ENCODE measurements at regions of chr6 and their contacts with region 1.

Region 1: DNA sequence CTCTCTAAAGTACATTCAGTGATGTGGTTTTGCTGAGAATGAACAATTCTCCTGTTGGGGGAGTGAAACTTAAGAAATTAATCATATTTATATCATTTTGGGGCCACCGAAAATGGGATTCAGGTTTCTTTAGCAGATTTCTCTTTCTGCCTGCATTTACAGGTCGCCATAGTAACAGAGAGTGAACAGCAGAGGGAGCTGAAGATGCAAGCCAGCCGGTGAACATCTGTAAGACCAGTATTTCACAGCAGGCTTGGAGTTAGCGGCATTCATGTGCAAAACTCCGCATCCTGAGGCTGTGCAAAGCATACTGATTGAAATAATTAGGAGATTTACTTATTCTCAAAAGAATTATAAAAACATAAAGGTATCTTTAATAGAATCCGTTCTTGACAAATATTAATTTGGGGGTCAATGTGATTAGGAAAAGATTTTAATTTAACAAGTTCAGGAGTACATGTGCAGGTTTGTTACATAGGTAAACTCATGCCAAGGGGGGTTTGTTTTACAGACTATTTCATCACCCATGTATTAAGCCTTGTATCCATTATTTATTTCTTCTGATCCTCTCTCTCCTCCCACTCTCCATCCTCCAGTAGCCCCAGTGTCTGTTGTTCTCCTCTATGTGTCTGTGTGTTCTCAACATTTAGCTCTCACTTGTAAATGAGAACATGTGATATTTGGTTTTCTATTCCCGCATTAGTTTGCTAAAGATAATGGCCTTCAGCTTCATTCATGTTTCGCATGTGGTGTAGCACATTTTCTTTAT is 17.8 kb upstream of the HSF2 start:
- DNase-seq: peak; percentile 56 to 77 (median 58)
- ATAC-seq: peak; percentile 99
- H3K4me3 ChIP-seq: no peak overlapping the region
- H3K27ac ChIP-seq: no peak overlapping the region
- H3K4me1 ChIP-seq: no peaks in the 10 kb centered on the region
- H3K27me3 ChIP-seq: no peaks in the 10 kb centered on the region
- CTCF ChIP-seq: peak; percentile 70 to 78 (median 78)
- EP300 ChIP-seq: no peak
- POLR2A ChIP-seq: no peak
- RAD21 ChIP-seq: peak; percentile 70 to 85

Region 2: DNA sequence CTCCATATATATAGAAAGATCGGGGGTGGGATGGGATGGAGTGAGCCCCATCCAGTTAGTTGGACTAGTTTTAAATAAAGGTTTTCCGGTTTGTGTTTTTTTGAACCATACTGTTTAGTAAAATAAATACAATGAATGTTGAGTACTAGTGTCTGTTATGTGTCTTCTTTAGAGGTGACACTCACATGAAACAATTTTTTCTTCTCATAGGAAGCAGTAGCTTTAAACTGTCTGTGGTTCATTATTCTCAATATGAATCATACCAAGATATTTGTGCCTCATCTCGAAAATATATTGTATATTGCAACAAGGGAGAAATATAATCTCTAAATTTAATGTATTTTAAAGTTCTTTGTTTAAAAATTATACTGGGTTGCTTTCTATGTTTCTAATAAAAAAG is 51.1 kb after region 1 on chr6:
- CTCF ChIA-PET with region 1: no interaction called
- POLR2A ChIA-PET with region 1: no interaction called
- in situ Hi-C with region 1: no loop called
- intact Hi-C with region 1: loop called (anchors 5 kb)
- DNase-seq: no peak
- ATAC-seq: no peak
- H3K4me3 ChIP-seq: no peak overlapping the region
- H3K27ac ChIP-seq: no peak overlapping the region
- H3K4me1 ChIP-seq: no peaks in the 10 kb centered on the region; a peak in 1 of 5 replicates
- H3K27me3 ChIP-seq: no peaks in the 10 kb centered on the region
- CTCF ChIP-seq: no peak
- EP300 ChIP-seq: no peak
- POLR2A ChIP-seq: no peak
- RAD21 ChIP-seq: no peak

Region 3: DNA sequence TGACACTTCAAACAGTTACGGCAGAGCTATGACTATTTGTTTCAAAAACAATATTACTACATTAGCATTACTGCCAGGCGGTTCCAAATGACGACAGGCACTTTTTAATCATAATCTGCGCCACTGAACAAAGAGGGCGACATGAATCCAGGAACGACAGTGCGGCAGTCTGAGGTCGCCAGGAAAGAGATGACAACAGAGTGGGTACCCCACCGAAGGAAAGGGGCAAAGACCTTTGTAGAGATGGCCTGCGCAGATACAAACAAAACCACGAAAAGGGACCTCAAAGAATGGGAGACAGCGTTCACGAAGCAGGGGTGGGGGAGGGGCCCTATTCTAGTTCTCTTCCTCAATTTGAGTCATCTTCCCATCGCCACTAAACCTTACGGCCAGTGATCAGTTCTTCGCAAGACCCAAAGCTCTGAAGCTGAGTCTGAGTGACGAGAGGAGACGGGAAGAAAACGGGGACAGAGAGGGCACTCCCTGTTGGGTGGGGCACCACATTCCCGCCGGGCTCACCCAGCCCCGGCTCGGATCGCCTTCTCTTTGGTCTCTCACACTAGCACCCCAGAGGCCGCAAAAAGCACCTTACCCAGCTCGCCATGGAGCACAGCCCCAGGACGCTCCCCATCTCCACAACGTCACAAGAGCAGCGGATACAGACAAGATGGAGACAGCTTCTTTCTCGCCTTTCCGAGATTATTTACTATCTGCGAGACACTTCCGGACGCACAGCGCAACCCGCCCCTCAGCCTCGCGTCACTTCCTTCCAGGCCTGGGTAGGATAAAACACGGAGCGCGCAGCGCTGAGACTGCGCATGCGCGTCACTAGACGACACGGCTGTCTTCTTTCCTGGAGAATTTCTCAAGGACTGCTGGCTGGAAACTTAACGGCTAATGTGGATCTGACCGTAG is 89.7 kb after region 1 on chr6 and contains the start of gene SERINC1:
- CTCF ChIA-PET with region 1: no interaction called
- POLR2A ChIA-PET with region 1: no interaction called
- in situ Hi-C with region 1: no loop called
- intact Hi-C with region 1: loop called (anchors 5 kb)
- DNase-seq: peak; percentile 91 to 97 (median 92)
- ATAC-seq: peak; percentile 96
- H3K4me3 ChIP-seq: peak within 1 kb of the TSS; percentile 60
- H3K27ac ChIP-seq: peak within 1 kb of the TSS; percentile 87
- H3K4me1 ChIP-seq: peaks cover 0 to 6% of the 10 kb centered on the region in 2 experiments; a peak in 2 of 5 replicates
- H3K27me3 ChIP-seq: no peaks in the 10 kb centered on the region
- CTCF ChIP-seq: no peak
- EP300 ChIP-seq: no peak
- POLR2A ChIP-seq: peak; percentile 92
- RAD21 ChIP-seq: no peak
- polyA plus RNA-seq, gene SERINC1: 33.2 to 37.3 TPM

Region 4: GRCh38 chr6:122484760-122485159 is 103.1 kb after region 1 on chr6:
- CTCF ChIA-PET with region 1: no interaction called
- POLR2A ChIA-PET with region 1: no interaction called
- in situ Hi-C with region 1: no loop called
- intact Hi-C with region 1: loop called (anchors 5 kb)
- DNase-seq: peak in 2 of 4 experiments; percentile 9 to 51
- ATAC-seq: peak; percentile 68
- H3K4me3 ChIP-seq: no peak overlapping the region
- H3K27ac ChIP-seq: no peak overlapping the region
- H3K4me1 ChIP-seq: no peaks in the 10 kb centered on the region
- H3K27me3 ChIP-seq: no peaks in the 10 kb centered on the region
- CTCF ChIP-seq: peak in 1 of 3 experiments; percentile 5; a peak in 1 of 6 replicates
- EP300 ChIP-seq: peak; percentile 25; the same call in 1 of the 2 replicates
- POLR2A ChIP-seq: no peak
- RAD21 ChIP-seq: no peak

Region 5: DNA sequence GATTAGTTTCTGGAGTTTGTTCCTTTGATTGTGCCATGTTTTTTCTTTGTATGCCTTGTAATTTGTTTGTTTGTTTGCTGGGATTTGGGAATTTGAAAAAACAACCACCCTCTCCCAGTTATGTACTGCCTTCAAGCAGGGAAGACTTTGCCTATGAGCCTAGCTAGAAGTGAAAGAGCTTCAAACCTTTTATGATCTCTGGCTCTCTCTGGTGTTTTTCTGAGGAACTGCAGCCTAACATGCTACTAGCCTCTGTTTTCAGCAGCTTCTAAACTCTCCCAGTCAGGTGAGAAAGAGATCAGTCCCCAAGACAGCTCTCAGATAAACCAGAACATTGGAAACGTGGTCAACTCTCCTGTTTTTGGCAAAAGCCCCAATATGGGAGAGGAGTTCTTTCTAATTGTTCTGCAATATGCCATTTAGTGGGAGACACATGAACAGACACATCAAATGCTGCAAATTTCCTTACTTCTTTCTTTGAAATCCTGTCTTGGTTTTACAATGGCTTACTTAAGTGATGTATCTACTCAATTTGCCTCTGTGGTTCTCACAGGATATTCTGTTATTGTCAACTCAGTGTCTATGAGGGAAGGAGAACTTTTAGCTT is 148.9 kb after region 1 on chr6:
- CTCF ChIA-PET with region 1: interaction called, 8 read pairs
- POLR2A ChIA-PET with region 1: interaction called, 5 read pairs
- in situ Hi-C with region 1: no loop called
- intact Hi-C with region 1: loop called (anchors 1 kb)
- DNase-seq: peak; percentile 51 to 73 (median 56)
- ATAC-seq: peak; percentile 96
- H3K4me3 ChIP-seq: no peak overlapping the region
- H3K27ac ChIP-seq: no peak overlapping the region
- H3K4me1 ChIP-seq: no peaks in the 10 kb centered on the region
- H3K27me3 ChIP-seq: no peaks in the 10 kb centered on the region
- CTCF ChIP-seq: peak; percentile 72 to 86 (median 76)
- EP300 ChIP-seq: no peak
- POLR2A ChIP-seq: no peak
- RAD21 ChIP-seq: peak; percentile 83 to 95